ENCODE measurements at regions of chr3 and their contacts with region 1.

Region 1: GRCh38 chr3:119891944-119892721 is 110.2 kb downstream of the NR1I2 start:
- DNase-seq: peak; percentile 52
- ATAC-seq: peak; percentile 80
- H3K4me3 Mint-ChIP-seq: no peak overlapping the region
- H3K27ac Mint-ChIP-seq: no peak overlapping the region
- H3K4me1 Mint-ChIP-seq: peaks cover 19% of the 10 kb centered on the region
- H3K27me3 Mint-ChIP-seq: no peaks in the 10 kb centered on the region

Region 2: DNA sequence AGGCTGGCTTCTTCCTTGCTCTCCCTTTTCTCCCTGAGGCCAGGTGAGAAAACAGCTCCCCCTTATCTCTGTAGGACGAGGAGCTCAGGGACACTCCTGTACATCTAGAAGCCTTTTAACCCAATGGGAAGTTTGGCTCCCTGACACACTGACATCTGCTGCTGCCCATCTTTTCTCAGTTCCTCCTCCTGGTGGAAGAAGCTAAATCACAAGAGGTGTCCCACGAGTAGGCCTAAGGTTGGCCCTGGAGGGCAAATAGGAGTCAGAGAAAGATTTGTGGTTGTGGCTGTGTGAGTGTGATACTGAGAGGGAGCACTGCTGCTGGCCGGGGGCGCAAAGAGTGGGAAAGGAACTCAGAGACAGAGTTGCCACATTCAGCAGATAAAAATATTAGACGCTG is 548.4 kb before region 1 on chr3:
- CTCF ChIA-PET with region 1: no interaction called
- POLR2A ChIA-PET with region 1: no interaction called
- intact Hi-C with region 1: no loop called
- DNase-seq: no peak
- ATAC-seq: no peak
- H3K4me3 Mint-ChIP-seq: no peak overlapping the region
- H3K27ac Mint-ChIP-seq: no peak overlapping the region
- H3K4me1 Mint-ChIP-seq: no peaks in the 10 kb centered on the region
- H3K27me3 Mint-ChIP-seq: no peaks in the 10 kb centered on the region

Region 3: GRCh38 chr3:119912220-119912619 is 20.1 kb after region 1 on chr3:
- CTCF ChIA-PET with region 1: interaction called, 30 read pairs
- POLR2A ChIA-PET with region 1: no interaction called
- intact Hi-C with region 1: loop called (anchors 1 to 2 kb)
- DNase-seq: no peak
- ATAC-seq: peak; percentile 79
- H3K4me3 Mint-ChIP-seq: peak overlapping the region; percentile 44
- H3K27ac Mint-ChIP-seq: peak overlapping the region; percentile 90
- H3K4me1 Mint-ChIP-seq: peaks cover 27% of the 10 kb centered on the region
- H3K27me3 Mint-ChIP-seq: no peaks in the 10 kb centered on the region

Region 4: GRCh38 chr3:120177707-120178306 is 285.7 kb after region 1 on chr3:
- CTCF ChIA-PET with region 1: interaction called, 10 read pairs
- POLR2A ChIA-PET with region 1: no interaction called
- intact Hi-C with region 1: loop called (anchors 1 kb)
- DNase-seq: no peak
- ATAC-seq: no peak
- H3K4me3 Mint-ChIP-seq: no peak overlapping the region
- H3K27ac Mint-ChIP-seq: no peak overlapping the region
- H3K4me1 Mint-ChIP-seq: no peaks in the 10 kb centered on the region
- H3K27me3 Mint-ChIP-seq: no peaks in the 10 kb centered on the region

Region 5: GRCh38 chr3:120198305-120198878 is 306.3 kb after region 1 on chr3:
- CTCF ChIA-PET with region 1: interaction called, 11 read pairs
- POLR2A ChIA-PET with region 1: no interaction called
- intact Hi-C with region 1: loop called (anchors 1 to 2 kb)
- DNase-seq: peak; percentile 13
- ATAC-seq: no peak
- H3K4me3 Mint-ChIP-seq: no peak overlapping the region
- H3K27ac Mint-ChIP-seq: no peak overlapping the region
- H3K4me1 Mint-ChIP-seq: no peaks in the 10 kb centered on the region
- H3K27me3 Mint-ChIP-seq: no peaks in the 10 kb centered on the region

Region 6: DNA sequence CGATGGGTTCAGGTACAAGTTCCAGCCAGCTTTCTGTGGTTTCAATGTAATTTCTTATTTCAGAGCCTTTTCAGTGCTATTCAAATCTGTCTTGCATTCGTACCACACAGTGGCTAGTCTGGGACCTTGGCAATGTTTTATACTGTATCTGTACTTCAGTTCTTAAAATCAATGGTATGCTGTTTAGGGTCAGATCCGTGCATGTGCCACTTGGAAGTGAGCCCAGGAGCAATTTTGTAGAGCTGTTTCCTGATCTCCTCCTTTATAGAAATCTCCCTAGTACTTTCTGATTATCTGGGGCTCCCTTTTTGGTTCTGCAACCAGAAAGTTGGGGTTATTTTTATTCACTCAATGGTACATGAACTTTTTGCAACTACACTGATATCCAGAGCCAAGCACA is 644.5 kb after region 1 on chr3:
- CTCF ChIA-PET with region 1: no interaction called
- POLR2A ChIA-PET with region 1: no interaction called
- intact Hi-C with region 1: no loop called
- DNase-seq: no peak
- ATAC-seq: no peak
- H3K4me3 Mint-ChIP-seq: no peak overlapping the region
- H3K27ac Mint-ChIP-seq: no peak overlapping the region
- H3K4me1 Mint-ChIP-seq: no peaks in the 10 kb centered on the region
- H3K27me3 Mint-ChIP-seq: peaks cover 22% of the 10 kb centered on the region

Measured in activated CD4-positive, alpha-beta T cell treated with anti-CD3 and anti-CD28 coated beads for 36 hours (primary cell).